Activated CD4-positive, alpha-beta memory T cell treated with anti-CD3 and anti-CD28 coated beads, Interleukin-2, amount 10 ng/mL, durations not matched to agents 7 days and 5 days (primary cell): ENCODE measurements at regions of chr3 and their contacts with region 1.

Region 1: GRCh38 chr3:122679085-122679881 is 1.4 kb upstream of the PARP14 start:
- DNase-seq: peak; percentile 88
- H3K4me3 Mint-ChIP-seq: peak overlapping the region; percentile 96
- H3K27ac Mint-ChIP-seq: peak overlapping the region; percentile 93
- H3K4me1 Mint-ChIP-seq: peaks cover 47% of the 10 kb centered on the region
- H3K27me3 Mint-ChIP-seq: no peaks in the 10 kb centered on the region

Region 2: DNA sequence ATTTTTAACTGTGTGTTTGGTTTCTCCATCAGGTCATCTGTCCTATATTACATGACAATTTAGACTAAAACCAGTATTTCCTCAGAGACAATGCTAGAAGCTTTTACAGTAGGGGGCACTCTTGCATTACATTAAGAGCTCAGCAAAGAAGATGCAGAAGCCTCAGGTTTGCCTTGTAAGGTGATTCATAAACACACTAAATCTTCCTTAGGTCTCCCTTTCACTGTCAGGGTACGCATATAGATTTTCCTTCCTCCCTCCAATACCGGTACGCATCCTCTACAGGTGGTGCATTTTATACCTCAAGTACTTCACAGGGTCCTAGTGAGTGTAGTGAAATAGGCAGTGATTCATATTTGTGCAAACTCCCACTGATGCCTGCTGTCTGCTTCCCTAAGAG is 577.6 kb before region 1 on chr3:
- CTCF ChIA-PET with region 1: interaction called, 11 read pairs
- POLR2A ChIA-PET with region 1: interaction called, 7 read pairs
- DNase-seq: no peak
- H3K4me3 Mint-ChIP-seq: peak overlapping the region; percentile 25
- H3K27ac Mint-ChIP-seq: no peak overlapping the region
- H3K4me1 Mint-ChIP-seq: peaks cover 14% of the 10 kb centered on the region
- H3K27me3 Mint-ChIP-seq: no peaks in the 10 kb centered on the region

Region 3: GRCh38 chr3:122392868-122393844 is 286.1 kb before region 1 on chr3:
- CTCF ChIA-PET with region 1: interaction called, 20 read pairs
- POLR2A ChIA-PET with region 1: interaction called, 6 read pairs
- DNase-seq: peak; percentile 23
- H3K4me3 Mint-ChIP-seq: no peak overlapping the region
- H3K27ac Mint-ChIP-seq: no peak overlapping the region
- H3K4me1 Mint-ChIP-seq: peaks cover 25% of the 10 kb centered on the region
- H3K27me3 Mint-ChIP-seq: no peaks in the 10 kb centered on the region

Region 4: GRCh38 chr3:122514123-122515019 is 164.9 kb before region 1 on chr3 and contains the start of gene KPNA1:
- CTCF ChIA-PET with region 1: interaction called, 5 read pairs
- POLR2A ChIA-PET with region 1: interaction called, 16 read pairs
- DNase-seq: peak; percentile 89
- H3K4me3 Mint-ChIP-seq: peak within 1 kb of the TSS; percentile 78
- H3K27ac Mint-ChIP-seq: peak within 1 kb of the TSS; percentile 77
- H3K4me1 Mint-ChIP-seq: peaks cover 28% of the 10 kb centered on the region
- H3K27me3 Mint-ChIP-seq: peaks cover 5% of the 10 kb centered on the region
- total RNA-seq, gene KPNA1: 41.8 to 45.8 TPM

Region 5: DNA sequence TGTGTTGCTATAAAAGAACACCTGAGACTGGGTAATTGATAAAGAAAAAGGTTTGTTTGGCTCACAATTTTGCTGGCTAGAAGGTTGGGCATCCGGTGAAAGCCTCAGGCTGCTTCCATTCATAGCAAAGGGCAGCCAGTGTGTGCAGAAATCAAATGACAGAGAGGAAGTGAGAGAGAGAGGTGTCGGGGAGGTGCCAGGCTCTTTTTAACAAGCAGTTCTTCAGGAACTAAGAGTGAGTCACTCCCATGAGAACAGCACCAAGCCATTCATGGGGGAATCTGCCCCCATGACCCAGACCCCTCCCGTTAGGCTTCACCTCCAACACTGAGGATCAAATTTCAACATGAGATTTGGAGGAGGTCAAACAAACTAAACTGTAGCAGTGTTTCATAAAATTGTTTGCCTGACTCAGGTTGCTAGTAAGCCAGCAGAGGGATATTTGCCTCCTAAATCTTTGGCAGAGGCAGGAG is 106.3 kb before region 1 on chr3:
- CTCF ChIA-PET with region 1: interaction called, 23 read pairs
- POLR2A ChIA-PET with region 1: interaction called, 31 read pairs
- DNase-seq: peak; percentile 58
- H3K4me3 Mint-ChIP-seq: no peak overlapping the region
- H3K27ac Mint-ChIP-seq: peak overlapping the region; percentile 72
- H3K4me1 Mint-ChIP-seq: peaks cover 77% of the 10 kb centered on the region
- H3K27me3 Mint-ChIP-seq: no peaks in the 10 kb centered on the region

Region 6: GRCh38 chr3:122668930-122669730 is 10.2 kb before region 1 on chr3:
- CTCF ChIA-PET with region 1: interaction called, 22 read pairs
- POLR2A ChIA-PET with region 1: interaction called, 21 read pairs
- DNase-seq: peak; percentile 26
- H3K4me3 Mint-ChIP-seq: no peak overlapping the region
- H3K27ac Mint-ChIP-seq: peak overlapping the region; percentile 37
- H3K4me1 Mint-ChIP-seq: peaks cover 17% of the 10 kb centered on the region
- H3K27me3 Mint-ChIP-seq: no peaks in the 10 kb centered on the region